GM23248 (cell line): ENCODE measurements at regions of chr1 and their contacts with region 1.

Region 1: GRCh38 chr1:15062479-15063099 is 91.0 kb upstream of the TMEM51 start:
- DNase-seq: no peak
- H3K4me3 ChIP-seq: no peak overlapping the region
- H3K27ac ChIP-seq: no peak overlapping the region
- H3K4me1 ChIP-seq: no peaks in the 10 kb centered on the region
- H3K27me3 ChIP-seq: no peaks in the 10 kb centered on the region

Region 2: DNA sequence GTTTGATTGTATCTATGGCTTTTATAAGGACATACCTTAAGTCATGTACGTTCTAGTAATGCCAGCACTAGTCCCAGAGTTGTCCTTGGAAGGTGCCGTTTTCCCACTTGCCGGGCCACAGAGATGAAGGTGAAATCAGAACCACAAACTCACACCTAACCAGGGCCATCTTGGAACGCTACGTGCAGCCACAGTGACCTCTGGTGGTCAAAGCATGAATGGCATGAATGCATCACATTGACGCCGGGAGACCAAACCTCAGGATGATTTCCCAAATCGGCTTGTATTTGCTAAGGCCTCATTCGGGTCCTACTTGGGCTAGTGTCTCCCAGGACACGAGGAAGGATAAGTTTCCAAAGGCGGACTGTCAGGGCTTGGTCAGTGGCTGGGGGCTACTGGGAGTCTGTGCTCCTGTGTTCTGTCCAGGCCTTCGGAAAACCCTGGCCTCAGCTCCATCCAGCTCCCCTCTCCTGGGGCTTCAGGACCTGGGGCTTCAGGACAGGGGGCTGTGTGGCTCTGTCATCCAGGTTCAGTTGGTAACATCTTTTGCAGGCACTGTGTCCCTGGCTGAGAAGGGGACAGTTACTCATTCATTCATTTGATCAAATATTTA is 1102.1 kb before region 1 on chr1:
- in situ Hi-C with region 1: loop called (anchors 25 kb)
- DNase-seq: peak; percentile 62
- H3K4me3 ChIP-seq: no peak overlapping the region
- H3K27ac ChIP-seq: no peak overlapping the region
- H3K4me1 ChIP-seq: 0 out of 2 replicates have a peak, but pooled peaks cover 4% of the 10 kb centered on the region
- H3K27me3 ChIP-seq: no peaks in the 10 kb centered on the region

Region 3: DNA sequence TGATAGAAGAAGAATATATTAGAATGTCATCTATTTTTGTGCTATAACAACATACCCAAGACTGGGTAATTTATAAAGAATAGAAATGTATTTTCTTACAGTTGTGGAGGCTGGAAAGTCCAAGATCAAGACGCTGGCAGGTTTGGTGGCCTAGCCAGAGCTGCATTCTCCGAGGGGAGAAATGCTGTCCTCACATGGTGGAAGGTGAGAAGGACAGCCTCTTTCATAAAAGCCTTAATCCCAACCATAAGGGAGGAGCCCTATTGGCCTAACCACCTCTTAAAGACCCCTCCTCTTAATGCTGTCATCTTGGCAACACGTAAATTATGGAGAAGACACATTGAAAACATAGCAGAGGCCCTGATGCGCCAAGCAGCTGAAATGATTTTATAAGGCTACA is 524.3 kb before region 1 on chr1:
- in situ Hi-C with region 1: no loop called
- DNase-seq: no peak
- H3K4me3 ChIP-seq: no peak overlapping the region
- H3K27ac ChIP-seq: no peak overlapping the region
- H3K4me1 ChIP-seq: peaks cover 5% of the 10 kb centered on the region; the same call in 1 of the 2 replicates
- H3K27me3 ChIP-seq: no peaks in the 10 kb centered on the region